ENCODE measurements at regions of chr12 and their contacts with region 1.

Region 1: DNA sequence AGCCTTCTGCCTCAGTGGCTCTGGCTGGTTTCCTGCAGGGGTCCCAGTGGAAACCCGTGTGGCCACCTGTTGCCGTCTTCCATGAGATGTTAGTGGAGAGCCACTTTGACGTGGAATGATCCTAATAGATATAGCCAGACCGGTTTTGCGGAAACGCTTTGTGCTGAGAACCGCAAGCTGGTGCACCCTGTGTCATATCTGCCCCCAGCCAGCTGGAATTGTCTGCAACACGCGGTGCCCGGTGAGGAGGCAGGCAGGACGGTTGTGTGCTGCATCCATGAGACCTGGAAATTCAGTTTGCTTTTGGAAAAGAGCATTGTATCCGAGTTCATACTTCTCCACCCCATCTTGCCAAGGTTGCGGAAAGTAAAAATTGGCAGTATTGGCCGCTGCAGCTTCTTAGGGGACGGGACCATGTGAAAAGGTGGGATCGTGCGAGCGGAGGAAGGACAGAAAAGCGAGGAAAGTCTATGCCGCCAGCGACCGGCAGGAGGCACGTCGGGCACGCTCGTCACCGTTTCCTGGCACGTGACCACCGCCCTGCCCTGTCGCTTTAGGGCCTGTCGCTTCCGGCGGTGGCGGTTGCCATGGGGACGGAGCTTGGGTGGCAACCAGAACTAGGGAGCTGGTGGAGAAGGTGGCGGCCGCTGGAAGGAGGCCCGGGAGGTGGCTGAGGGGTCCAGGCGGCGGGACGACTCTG is at the start of gene CFAP251:
- DNase-seq: peak; percentile 96
- ATAC-seq: peak; percentile 98
- H3K4me3 ChIP-seq: peak within 1 kb of the TSS in 4 of 5 experiments; percentile 28 to 64 (median 52)
- H3K4me3 Mint-ChIP-seq: peak within 1 kb of the TSS; percentile 92
- H3K27ac ChIP-seq: peak within 1 kb of the TSS in 1 of 2 donors; percentile 77
- H3K27ac Mint-ChIP-seq: peak within 1 kb of the TSS; percentile 80
- H3K4me1 ChIP-seq: peaks cover 8 to 11% of the 10 kb centered on the region in 2 donors
- H3K4me1 Mint-ChIP-seq: peaks cover 11% of the 10 kb centered on the region
- H3K27me3 ChIP-seq: no peaks in the 10 kb centered on the region
- H3K27me3 Mint-ChIP-seq: no peaks in the 10 kb centered on the region
- CTCF ChIP-seq: peak; percentile 86
- total RNA-seq, gene CFAP251: 1.4 and 1.6 TPM in 2 replicates

Region 2: DNA sequence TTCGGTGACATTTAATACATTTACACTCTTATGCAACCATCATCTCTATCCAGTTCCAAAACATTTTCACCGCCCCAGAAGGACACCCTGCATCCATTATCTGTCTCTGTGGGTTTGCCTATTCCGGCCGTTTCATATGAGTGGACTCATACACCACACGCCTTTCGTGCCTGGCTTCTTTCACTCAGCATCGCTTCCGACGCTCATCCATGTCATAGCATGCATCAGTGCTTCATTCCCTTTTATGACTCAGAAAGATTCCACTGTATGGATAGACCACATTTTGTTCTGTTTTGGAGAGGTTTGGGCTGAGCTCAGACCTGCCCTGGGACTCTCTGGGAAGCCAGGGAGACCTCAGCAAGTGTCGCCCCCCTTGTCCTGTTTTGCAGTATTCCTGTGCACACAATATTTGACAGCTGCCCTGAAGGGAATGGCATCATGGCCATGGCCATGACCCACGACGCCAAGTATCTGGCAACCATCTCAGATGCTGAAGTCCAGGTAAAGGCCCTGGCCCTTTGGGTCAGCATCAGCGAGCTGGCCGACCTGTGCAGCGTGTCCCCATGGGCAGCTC is 24.1 kb after region 1 on chr12:
- CTCF ChIA-PET with region 1: no interaction called
- POLR2A ChIA-PET with region 1: no interaction called
- intact Hi-C with region 1: no loop called
- DNase-seq: no peak
- ATAC-seq: no peak
- H3K4me3 ChIP-seq: no peak overlapping the region
- H3K4me3 Mint-ChIP-seq: no peak overlapping the region
- H3K27ac ChIP-seq: no peak overlapping the region
- H3K27ac Mint-ChIP-seq: no peak overlapping the region
- H3K4me1 ChIP-seq: peaks cover 4 to 8% of the 10 kb centered on the region in 2 donors
- H3K4me1 Mint-ChIP-seq: peaks cover 8% of the 10 kb centered on the region
- H3K27me3 ChIP-seq: no peaks in the 10 kb centered on the region
- H3K27me3 Mint-ChIP-seq: no peaks in the 10 kb centered on the region
- CTCF ChIP-seq: no peak

Region 3: DNA sequence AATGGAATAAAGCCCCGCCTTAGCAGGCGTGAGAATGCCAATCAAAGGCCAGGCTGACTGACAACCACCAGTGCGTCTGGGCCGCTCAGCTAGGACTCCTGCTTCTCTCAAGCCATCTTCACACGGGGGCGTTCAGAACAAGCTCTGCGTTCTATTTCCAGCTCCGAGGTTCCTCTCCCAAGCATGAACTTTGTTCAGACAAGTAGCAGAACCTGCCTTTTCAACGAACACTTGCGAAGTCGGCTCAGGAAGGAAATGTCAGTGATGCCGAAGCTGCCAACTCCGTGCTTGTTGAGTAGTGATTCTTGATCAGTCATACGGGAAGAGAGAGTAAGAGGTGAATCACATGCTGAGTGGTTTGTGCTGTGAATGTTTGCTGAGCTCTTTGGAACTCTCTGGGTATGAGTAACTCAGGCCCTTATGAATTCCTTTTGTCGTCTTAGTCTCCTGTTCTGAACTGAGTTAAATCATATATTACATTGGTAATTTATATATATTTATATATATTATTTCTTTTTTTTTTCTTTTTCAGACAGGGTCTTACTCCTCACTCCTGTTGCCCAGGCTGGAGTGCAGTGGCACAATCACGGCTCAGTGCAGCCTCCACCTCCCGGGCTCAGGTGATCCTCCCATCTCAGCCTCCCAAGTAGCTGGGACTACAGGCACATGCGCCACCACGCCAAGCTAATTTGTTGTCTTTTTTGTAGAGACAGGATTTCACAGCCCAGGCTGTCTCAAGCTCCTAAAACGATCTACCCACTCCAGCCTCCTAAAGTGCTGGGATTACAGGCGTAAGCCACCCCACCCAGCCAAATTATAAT is 74.1 kb after region 1 on chr12:
- CTCF ChIA-PET with region 1: interaction called, 16 read pairs
- POLR2A ChIA-PET with region 1: interaction called, 12 read pairs
- intact Hi-C with region 1: no loop called
- DNase-seq: peak; percentile 86
- ATAC-seq: peak; percentile 89
- H3K4me3 ChIP-seq: peak overlapping the region in 1 of 5 experiments; percentile 9
- H3K4me3 Mint-ChIP-seq: peak overlapping the region; percentile 84
- H3K27ac ChIP-seq: peak overlapping the region; percentile 62 to 70
- H3K27ac Mint-ChIP-seq: peak overlapping the region; percentile 96
- H3K4me1 ChIP-seq: peaks cover 38% of the 10 kb centered on the region in 2 donors
- H3K4me1 Mint-ChIP-seq: peaks cover 44% of the 10 kb centered on the region
- H3K27me3 ChIP-seq: no peaks in the 10 kb centered on the region
- H3K27me3 Mint-ChIP-seq: no peaks in the 10 kb centered on the region
- CTCF ChIP-seq: no peak

Region 4: GRCh38 chr12:122021822-122022526 is 103.8 kb after region 1 on chr12 and contains the start of gene BCL7A:
- CTCF ChIA-PET with region 1: interaction called, 55 read pairs
- POLR2A ChIA-PET with region 1: interaction called, 6 read pairs
- intact Hi-C with region 1: loop called (anchors 1 kb)
- DNase-seq: peak; percentile 90
- ATAC-seq: peak; percentile 73
- H3K4me3 ChIP-seq: peak within 1 kb of the TSS; percentile 26 to 86 (median 78)
- H3K4me3 Mint-ChIP-seq: peak within 1 kb of the TSS; percentile 94
- H3K27ac ChIP-seq: peak within 1 kb of the TSS; percentile 67 to 80
- H3K27ac Mint-ChIP-seq: peak within 1 kb of the TSS; percentile 98
- H3K4me1 ChIP-seq: peaks cover 32 to 51% of the 10 kb centered on the region in 2 donors
- H3K4me1 Mint-ChIP-seq: peaks cover 38% of the 10 kb centered on the region
- H3K27me3 ChIP-seq: no peaks in the 10 kb centered on the region
- H3K27me3 Mint-ChIP-seq: no peaks in the 10 kb centered on the region
- CTCF ChIP-seq: no peak
- total RNA-seq, gene BCL7A: 75.6 and 75.9 TPM in 2 replicates

Region 5: GRCh38 chr12:122051231-122051876 is 133.2 kb after region 1 on chr12:
- CTCF ChIA-PET with region 1: interaction called, 12 read pairs
- POLR2A ChIA-PET with region 1: no interaction called
- intact Hi-C with region 1: loop called (anchors 1 kb)
- DNase-seq: no peak
- ATAC-seq: no peak
- H3K4me3 ChIP-seq: no peak overlapping the region
- H3K4me3 Mint-ChIP-seq: no peak overlapping the region
- H3K27ac ChIP-seq: no peak overlapping the region
- H3K27ac Mint-ChIP-seq: no peak overlapping the region
- H3K4me1 ChIP-seq: peaks cover 0 to 4% of the 10 kb centered on the region in 2 donors
- H3K4me1 Mint-ChIP-seq: peaks cover 1% of the 10 kb centered on the region
- H3K27me3 ChIP-seq: no peaks in the 10 kb centered on the region
- H3K27me3 Mint-ChIP-seq: no peaks in the 10 kb centered on the region
- CTCF ChIP-seq: no peak